ENCODE measurements at regions of chr9 and their contacts with region 1.

Region 1: DNA sequence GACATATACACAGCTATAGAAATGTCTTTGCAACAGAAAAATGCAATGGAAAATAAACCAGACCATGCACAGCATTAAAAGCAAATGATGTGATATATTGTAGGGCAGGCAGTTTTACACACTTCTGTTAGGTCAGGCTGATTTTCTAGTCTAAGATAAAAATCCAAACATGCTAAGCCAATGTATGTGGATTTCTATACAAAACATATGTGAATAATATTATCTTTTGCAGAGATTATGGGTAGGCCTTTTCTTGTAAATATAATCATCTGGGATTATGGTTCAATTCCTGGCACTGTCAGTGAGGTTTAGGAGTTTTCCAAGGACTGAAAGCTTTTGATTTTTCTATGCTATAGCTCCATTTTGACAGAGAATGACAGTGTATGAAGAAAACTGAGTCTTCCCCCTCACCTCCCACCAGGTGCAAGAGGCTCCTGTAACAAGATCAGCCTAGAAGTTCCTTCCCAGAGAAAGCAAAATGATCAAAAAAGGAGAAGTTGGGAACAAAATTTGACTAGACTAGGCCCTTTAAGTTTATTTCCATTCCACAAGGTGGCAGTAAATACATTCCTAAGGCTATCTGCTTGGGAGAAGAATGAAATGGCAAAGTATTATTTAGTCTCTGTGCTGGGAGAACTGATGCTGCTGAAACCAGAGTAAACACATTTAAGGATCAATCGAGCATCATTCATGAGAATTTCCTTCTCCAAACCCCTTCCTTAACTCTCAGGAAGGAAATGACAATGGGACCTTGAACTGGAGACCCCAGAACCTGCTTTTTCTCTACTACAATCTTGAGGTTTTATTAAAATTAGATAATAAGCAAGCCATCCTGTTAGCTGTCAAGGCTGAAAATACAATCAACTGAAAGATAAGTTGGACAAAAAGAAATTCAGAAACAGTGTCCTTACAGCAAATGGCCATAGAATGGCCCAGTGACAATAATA is 133.0 kb upstream of the TUT7 start:
- DNase-seq: no peak
- H3K4me3 ChIP-seq: no peak overlapping the region
- H3K4me3 Mint-ChIP-seq: no peak overlapping the region
- H3K27ac Mint-ChIP-seq: no peak overlapping the region
- H3K4me1 ChIP-seq: no peaks in the 10 kb centered on the region
- H3K4me1 Mint-ChIP-seq: no peaks in the 10 kb centered on the region
- H3K27me3 ChIP-seq: no peaks in the 10 kb centered on the region
- H3K27me3 Mint-ChIP-seq: peaks cover 2% of the 10 kb centered on the region
- CTCF ChIP-seq: peak; percentile 18 to 36

Region 2: DNA sequence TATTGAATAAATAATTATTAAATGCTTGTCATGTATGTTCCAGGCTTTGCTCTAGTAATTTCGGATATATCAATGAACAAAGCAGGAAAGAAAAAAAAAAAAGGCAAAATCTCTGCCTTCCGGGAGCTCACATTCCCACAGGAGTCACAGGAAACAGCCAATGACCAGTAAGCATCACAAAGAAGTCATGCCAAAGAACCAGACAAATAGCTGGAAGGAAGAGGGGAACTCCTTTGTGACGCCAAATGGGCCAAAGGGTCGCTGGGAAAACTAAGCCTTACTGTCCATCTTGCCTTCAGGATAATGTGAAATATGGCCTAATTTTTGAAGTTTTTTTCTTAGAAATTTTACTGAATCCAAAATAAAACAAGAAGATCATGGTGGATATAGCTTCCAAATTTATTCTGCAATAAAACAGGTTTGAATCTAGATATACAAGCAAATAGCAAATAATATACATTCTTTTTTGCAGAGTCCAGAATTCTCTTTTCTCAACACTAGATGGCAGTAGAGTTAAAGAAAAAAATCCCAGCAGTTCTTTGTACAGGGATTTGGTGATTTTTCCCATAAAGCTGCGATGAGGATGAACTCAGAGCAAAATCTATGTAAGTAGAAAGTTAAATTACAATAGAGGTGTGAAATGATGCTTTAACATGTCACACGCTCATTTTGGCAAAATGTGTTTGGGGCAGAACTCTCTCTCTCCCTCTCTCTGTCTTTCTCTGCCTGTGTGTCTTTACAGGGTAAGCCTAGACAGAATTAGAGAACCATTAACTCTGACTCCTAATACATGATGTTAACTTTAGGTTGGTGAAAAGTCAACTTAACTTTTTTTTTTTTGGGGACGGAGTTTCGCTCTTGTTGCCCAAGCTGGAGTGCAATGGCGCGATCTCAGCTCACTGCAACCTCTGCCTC is 72.9 kb before region 1 on chr9:
- CTCF ChIA-PET with region 1: interaction called, 3 read pairs
- POLR2A ChIA-PET with region 1: no interaction called
- intact Hi-C with region 1: loop called (anchors 5 kb)
- DNase-seq: no peak
- H3K4me3 ChIP-seq: no peak overlapping the region
- H3K4me3 Mint-ChIP-seq: no peak overlapping the region
- H3K27ac Mint-ChIP-seq: no peak overlapping the region
- H3K4me1 ChIP-seq: no peaks in the 10 kb centered on the region
- H3K4me1 Mint-ChIP-seq: no peaks in the 10 kb centered on the region
- H3K27me3 ChIP-seq: no peaks in the 10 kb centered on the region
- H3K27me3 Mint-ChIP-seq: no peaks in the 10 kb centered on the region
- CTCF ChIP-seq: peak; percentile 36 to 37

Region 3: DNA sequence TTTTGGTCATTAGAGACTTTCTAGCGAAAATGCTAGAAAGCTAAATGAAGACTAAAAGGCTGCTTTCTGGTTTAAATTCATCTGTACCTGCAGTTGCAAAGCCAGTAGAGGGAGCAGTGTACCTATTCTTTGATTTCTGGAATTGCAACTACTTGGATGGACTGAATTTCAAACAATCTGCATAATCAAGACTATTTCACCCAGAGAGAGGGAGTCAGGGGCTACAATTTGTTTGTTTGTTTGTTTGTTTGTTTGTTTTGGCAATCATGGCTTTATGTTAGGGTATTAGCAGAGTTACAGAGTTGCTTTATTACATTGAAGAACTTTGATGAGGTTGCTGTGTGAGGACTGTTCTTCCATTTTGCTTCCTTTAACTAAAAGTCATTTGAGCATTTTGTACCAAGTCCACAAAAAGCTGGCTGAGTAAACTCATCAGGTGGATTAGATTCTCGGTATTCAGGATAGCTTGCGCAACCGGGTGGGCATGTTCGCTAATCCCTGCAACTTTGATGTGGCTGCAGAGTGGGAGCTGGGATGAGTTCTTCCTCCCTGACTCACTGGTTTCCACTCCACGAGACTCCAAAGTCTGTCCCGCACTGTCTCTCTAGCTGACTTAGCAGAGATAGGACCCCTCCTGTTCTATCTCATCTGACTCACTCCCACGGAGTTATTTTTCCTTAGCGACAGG is 53.0 kb before region 1 on chr9:
- CTCF ChIA-PET with region 1: no interaction called
- POLR2A ChIA-PET with region 1: no interaction called
- intact Hi-C with region 1: loop called (anchors 5 kb)
- DNase-seq: peak in 1 of 2 experiments; percentile 16
- H3K4me3 ChIP-seq: no peak overlapping the region
- H3K4me3 Mint-ChIP-seq: peak overlapping the region; percentile 19
- H3K27ac Mint-ChIP-seq: no peak overlapping the region
- H3K4me1 ChIP-seq: no peaks in the 10 kb centered on the region
- H3K4me1 Mint-ChIP-seq: no peaks in the 10 kb centered on the region
- H3K27me3 ChIP-seq: no peaks in the 10 kb centered on the region
- H3K27me3 Mint-ChIP-seq: no peaks in the 10 kb centered on the region
- CTCF ChIP-seq: peak; percentile 40 to 51

Region 4: DNA sequence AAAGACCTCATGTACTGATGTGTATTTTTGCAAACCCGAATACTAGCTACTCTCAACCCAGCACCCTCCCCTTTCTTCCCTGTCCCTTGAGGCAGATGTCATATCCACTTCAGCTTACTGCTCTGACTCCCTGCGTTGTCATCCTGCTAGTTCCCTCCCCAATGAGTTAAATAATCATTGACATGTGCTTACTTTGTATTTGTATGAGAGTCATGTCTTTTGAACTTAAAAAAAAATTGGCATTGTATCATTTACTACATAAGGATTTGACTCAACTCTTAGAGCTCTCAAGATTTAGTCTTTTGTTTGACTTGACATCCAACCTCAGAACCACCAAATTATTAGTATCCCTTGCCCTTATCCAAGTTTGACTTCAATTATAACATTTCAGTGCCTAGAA is 86.7 kb after region 1 on chr9:
- CTCF ChIA-PET with region 1: no interaction called
- POLR2A ChIA-PET with region 1: no interaction called
- intact Hi-C with region 1: no loop called
- DNase-seq: no peak
- H3K4me3 ChIP-seq: no peak overlapping the region
- H3K4me3 Mint-ChIP-seq: no peak overlapping the region
- H3K27ac Mint-ChIP-seq: no peak overlapping the region
- H3K4me1 ChIP-seq: no peaks in the 10 kb centered on the region
- H3K4me1 Mint-ChIP-seq: no peaks in the 10 kb centered on the region
- H3K27me3 ChIP-seq: no peaks in the 10 kb centered on the region
- H3K27me3 Mint-ChIP-seq: peaks cover 10% of the 10 kb centered on the region
- CTCF ChIP-seq: no peak

Region 5: GRCh38 chr9:86639899-86640379 is 152.8 kb after region 1 on chr9:
- CTCF ChIA-PET with region 1: no interaction called
- POLR2A ChIA-PET with region 1: no interaction called
- intact Hi-C with region 1: loop called (anchors 5 kb)
- DNase-seq: peak; percentile 37 to 50
- H3K4me3 ChIP-seq: no peak overlapping the region
- H3K4me3 Mint-ChIP-seq: no peak overlapping the region
- H3K27ac Mint-ChIP-seq: no peak overlapping the region
- H3K4me1 ChIP-seq: 0 out of 2 replicates have a peak, but pooled peaks cover 3% of the 10 kb centered on the region
- H3K4me1 Mint-ChIP-seq: no peaks in the 10 kb centered on the region
- H3K27me3 ChIP-seq: peaks cover 1% of the 10 kb centered on the region
- H3K27me3 Mint-ChIP-seq: peaks cover 22% of the 10 kb centered on the region
- CTCF ChIP-seq: no peak